ENCODE measurements at regions of chr6 and their contacts with region 1.

Region 1: DNA sequence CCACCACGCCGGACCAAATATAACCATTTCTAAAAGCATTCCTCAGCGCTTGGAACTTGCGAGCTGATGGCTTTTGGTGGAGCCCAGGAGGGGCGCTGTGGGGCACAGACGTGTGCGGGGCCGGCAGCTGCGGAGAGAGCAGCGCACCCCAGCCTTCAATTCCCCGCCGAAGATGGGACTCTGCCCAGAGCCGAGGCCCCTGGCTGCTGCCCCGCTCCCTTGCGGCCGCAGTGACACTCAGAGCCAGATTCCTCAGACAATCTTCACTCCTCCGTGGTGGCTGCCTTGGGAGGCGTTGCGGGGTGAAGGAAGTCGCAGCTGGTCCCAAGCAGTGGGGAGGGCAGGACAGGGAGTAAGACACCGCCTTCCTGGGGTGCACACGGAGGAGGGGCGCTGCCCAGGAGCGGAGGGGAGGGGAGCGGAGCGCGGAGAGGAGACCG is 87.7 kb downstream of the TMEM242 start:
- DNase-seq: peak; percentile 63
- ATAC-seq: peak; percentile 91
- H3K4me3 Mint-ChIP-seq: peak overlapping the region; percentile 83
- H3K27ac Mint-ChIP-seq: no peak overlapping the region
- H3K4me1 Mint-ChIP-seq: peaks cover 11% of the 10 kb centered on the region
- H3K27me3 Mint-ChIP-seq: peaks cover 39% of the 10 kb centered on the region
- CTCF ChIP-seq: peak; percentile 72

Region 2: GRCh38 chr6:157134402-157135047 is 101.1 kb before region 1 on chr6:
- CTCF ChIA-PET with region 1: no interaction called
- POLR2A ChIA-PET with region 1: no interaction called
- intact Hi-C with region 1: no loop called
- DNase-seq: no peak
- ATAC-seq: no peak
- H3K4me3 Mint-ChIP-seq: no peak overlapping the region
- H3K27ac Mint-ChIP-seq: no peak overlapping the region
- H3K4me1 Mint-ChIP-seq: peaks cover 10% of the 10 kb centered on the region
- H3K27me3 Mint-ChIP-seq: no peaks in the 10 kb centered on the region
- CTCF ChIP-seq: no peak

Region 3: GRCh38 chr6:157223021-157223430 is 12.6 kb before region 1 on chr6:
- CTCF ChIA-PET with region 1: interaction called, 16 read pairs
- POLR2A ChIA-PET with region 1: interaction called, 3 read pairs
- intact Hi-C with region 1: no loop called
- DNase-seq: no peak
- ATAC-seq: no peak
- H3K4me3 Mint-ChIP-seq: no peak overlapping the region
- H3K27ac Mint-ChIP-seq: no peak overlapping the region
- H3K4me1 Mint-ChIP-seq: peaks cover 25% of the 10 kb centered on the region
- H3K27me3 Mint-ChIP-seq: no peaks in the 10 kb centered on the region
- CTCF ChIP-seq: no peak

Region 4: DNA sequence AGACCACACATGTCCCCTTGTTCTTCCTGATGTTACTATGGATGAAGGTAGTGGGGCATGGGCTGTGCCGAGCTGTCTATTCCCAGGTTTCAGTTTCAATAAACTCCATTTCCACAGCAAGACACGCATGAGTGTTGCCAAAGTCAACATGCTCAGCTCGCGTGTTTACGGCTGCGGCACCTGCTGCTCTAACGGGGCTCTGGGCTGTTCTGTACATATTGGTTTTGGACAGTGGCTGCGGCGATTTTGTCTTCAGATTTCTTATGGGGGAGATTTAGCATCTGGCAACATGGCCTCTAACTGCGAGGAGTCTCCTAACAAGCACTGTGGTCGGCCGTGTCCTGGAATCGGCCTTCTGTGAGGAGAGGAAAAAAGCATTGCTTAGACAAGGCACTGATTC is 29.1 kb after region 1 on chr6:
- CTCF ChIA-PET with region 1: interaction called, 17 read pairs
- POLR2A ChIA-PET with region 1: no interaction called
- intact Hi-C with region 1: no loop called
- DNase-seq: no peak
- ATAC-seq: no peak
- H3K4me3 Mint-ChIP-seq: no peak overlapping the region
- H3K27ac Mint-ChIP-seq: no peak overlapping the region
- H3K4me1 Mint-ChIP-seq: peaks cover under 1% of the 10 kb centered on the region
- H3K27me3 Mint-ChIP-seq: no peaks in the 10 kb centered on the region
- CTCF ChIP-seq: no peak

Region 5: DNA sequence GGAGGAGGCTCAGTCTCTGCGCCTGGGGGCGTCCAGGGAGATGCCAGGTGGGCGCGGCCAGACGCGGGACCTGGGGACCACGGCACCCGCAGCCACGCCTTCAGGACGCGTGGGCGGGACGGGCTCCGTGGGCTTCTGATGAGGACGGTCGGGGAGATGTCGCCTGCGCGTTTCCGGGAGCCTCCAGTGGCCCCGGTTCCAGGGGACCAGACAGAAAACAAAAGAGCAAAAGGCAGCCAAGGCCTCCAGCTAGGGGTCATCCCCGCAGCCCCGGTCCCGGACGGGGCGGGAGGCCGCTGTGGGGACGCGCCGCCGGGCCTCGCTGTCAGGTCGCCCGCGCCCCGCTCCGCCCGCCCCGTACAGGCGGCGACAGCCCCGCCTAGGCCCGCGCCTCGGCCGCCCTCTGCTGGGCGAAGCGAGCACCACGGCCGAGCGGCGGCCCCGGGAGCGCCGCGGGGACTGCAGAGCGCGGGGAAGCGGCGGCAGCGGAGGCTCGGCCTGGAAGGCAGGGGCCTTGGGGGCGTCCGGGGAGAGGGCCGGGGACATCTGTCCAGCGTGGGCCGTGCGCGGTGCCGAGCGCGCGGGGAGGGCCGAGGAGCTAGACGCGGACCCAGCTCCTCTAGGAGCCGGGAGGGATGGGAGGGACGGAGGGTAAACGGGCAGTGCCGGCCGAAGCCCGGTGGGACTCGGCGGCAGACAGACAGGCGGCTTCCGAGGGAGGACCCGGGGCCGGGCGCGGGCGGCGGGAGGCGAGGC is 39.0 kb after region 1 on chr6:
- CTCF ChIA-PET with region 1: interaction called, 20 read pairs
- POLR2A ChIA-PET with region 1: interaction called, 3 read pairs
- intact Hi-C with region 1: no loop called
- DNase-seq: peak; percentile 88
- ATAC-seq: peak; percentile 92
- H3K4me3 Mint-ChIP-seq: peak overlapping the region; percentile 80
- H3K27ac Mint-ChIP-seq: peak overlapping the region; percentile 85
- H3K4me1 Mint-ChIP-seq: peaks cover 7% of the 10 kb centered on the region
- H3K27me3 Mint-ChIP-seq: no peaks in the 10 kb centered on the region
- CTCF ChIP-seq: peak; percentile 89

Measured in activated CD8-positive, alpha-beta T cell treated with anti-CD3 and anti-CD28 coated beads for 36 hours (primary cell).